CD8-positive, alpha-beta T cell (primary cell): ENCODE measurements at regions of chr6 and their contacts with region 1.

Region 1: DNA sequence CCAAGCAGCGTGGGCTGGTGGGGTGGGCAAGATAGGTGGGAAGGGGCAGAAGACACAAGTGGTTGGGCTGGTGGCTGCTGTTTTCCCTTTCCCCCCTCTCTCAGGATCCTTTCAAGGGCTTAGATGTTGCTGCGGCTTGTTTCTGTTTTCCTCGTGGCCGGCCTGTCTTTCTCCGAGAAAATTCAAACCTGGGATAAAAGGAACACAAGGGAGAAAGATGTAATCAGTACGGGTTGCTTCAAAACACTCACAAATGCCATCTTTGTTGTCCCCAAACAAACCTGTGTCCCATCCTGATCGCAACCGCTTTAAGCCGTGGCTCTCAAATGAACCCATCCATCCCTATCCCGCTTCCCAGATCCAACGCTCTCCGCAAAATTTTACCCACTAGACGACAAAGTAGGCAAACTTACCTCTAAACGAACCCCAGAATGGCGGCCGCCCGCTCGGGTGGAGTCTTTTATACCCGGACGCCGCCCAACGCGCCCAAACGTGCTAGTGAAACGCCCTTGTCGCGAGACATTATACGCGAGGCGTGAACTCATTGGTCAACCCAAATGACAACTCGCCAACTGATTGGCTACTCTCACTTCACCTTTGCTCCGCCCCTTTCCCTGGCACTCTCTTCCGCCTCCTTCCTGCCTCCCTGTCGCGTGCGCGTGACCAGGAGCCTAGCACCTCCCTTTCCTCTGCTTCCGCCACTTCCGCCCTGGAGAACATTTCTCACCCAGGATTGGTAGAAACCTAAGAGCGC is at the start of gene PPP1R10:
- DNase-seq: peak; percentile 95 to 100 (median 97)
- ATAC-seq: peak; percentile 76
- H3K4me3 ChIP-seq: peak within 1 kb of the TSS; percentile 91 to 96
- H3K4me3 Mint-ChIP-seq: peak within 1 kb of the TSS; percentile 100
- H3K27ac ChIP-seq: peak within 1 kb of the TSS; percentile 99 to 100
- H3K27ac Mint-ChIP-seq: peak within 1 kb of the TSS; percentile 100
- H3K4me1 ChIP-seq: peaks cover 43% of the 10 kb centered on the region
- H3K4me1 Mint-ChIP-seq: peaks cover 45% of the 10 kb centered on the region
- H3K27me3 ChIP-seq: no peaks in the 10 kb centered on the region
- H3K27me3 Mint-ChIP-seq: no peaks in the 10 kb centered on the region
- CTCF ChIP-seq: no peak
- total RNA-seq, gene PPP1R10: 85.5 to 95.4 TPM

Region 2: DNA sequence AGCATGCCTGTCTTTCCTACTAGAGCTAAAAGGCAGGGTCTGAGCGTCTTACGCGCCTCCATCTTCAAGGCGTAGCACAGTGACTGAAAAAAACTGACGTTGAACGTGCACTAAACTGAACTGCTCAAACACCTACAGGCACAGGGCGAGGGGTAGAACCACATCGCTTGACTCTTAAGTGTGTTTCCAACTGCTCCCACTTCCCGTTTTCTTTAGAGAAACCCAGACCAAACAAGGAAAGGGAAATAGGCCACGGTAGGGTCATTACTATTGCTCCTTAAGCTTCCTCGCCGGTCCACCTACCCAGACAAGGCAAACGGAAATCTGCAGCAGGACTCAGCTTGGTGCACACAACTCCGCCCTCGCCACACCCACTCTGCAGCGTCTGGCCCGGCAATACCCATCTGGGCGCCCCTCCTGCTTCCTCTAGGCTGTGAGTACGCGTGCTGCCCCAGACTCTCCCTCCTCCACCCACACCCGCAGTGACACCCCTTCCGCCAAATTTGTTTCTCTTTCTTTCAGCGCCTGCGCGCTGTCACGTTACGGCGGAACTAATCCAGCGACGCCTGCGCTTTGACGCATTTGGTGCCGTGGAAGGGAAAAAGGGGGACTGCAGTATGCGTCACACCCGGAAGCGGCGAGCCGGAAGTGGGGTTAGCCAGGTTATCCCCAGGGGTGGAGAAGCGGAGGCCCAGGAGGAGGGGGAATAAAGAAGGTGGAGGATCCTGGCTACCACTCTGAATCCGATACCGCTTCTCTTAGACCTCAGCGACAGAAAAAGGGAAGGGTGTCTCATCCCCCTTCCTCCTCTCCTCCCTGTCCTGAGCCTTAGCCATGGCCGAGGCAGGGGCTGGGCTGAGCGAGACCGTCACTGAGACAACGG is 550.2 kb before region 1 on chr6 and contains the start of gene PPP1R11:
- CTCF ChIA-PET with region 1: no interaction called
- POLR2A ChIA-PET with region 1: interaction called, 4 read pairs
- intact Hi-C with region 1: loop called in 1 of 2 experiments (anchors 5 kb)
- DNase-seq: peak; percentile 96 to 100 (median 98)
- ATAC-seq: peak; percentile 96
- H3K4me3 ChIP-seq: peak within 1 kb of the TSS; percentile 95 to 98
- H3K4me3 Mint-ChIP-seq: peak within 1 kb of the TSS; percentile 100
- H3K27ac ChIP-seq: peak within 1 kb of the TSS; percentile 96 to 99
- H3K27ac Mint-ChIP-seq: peak within 1 kb of the TSS; percentile 100
- H3K4me1 ChIP-seq: peaks cover 44% of the 10 kb centered on the region
- H3K4me1 Mint-ChIP-seq: peaks cover 56% of the 10 kb centered on the region
- H3K27me3 ChIP-seq: peaks cover 0 to 1% of the 10 kb centered on the region in 2 experiments
- H3K27me3 Mint-ChIP-seq: peaks cover 12% of the 10 kb centered on the region
- CTCF ChIP-seq: no peak
- total RNA-seq, gene PPP1R11: 24.7 to 28.3 TPM

Region 3: GRCh38 chr6:30489081-30490025 is 127.6 kb before region 1 on chr6 and contains the start of gene HLA-E:
- CTCF ChIA-PET with region 1: interaction called, 11 read pairs
- POLR2A ChIA-PET with region 1: interaction called, 37 read pairs
- intact Hi-C with region 1: loop called (anchors 1 kb)
- DNase-seq: peak; percentile 75 to 100 (median 87)
- ATAC-seq: peak; percentile 80
- H3K4me3 ChIP-seq: peak within 1 kb of the TSS; percentile 93 to 99
- H3K4me3 Mint-ChIP-seq: peak within 1 kb of the TSS; percentile 99
- H3K27ac ChIP-seq: peak within 1 kb of the TSS; percentile 94 to 96
- H3K27ac Mint-ChIP-seq: peak within 1 kb of the TSS; percentile 98
- H3K4me1 ChIP-seq: peaks cover 31% of the 10 kb centered on the region
- H3K4me1 Mint-ChIP-seq: peaks cover 52% of the 10 kb centered on the region
- H3K27me3 ChIP-seq: no peaks in the 10 kb centered on the region
- H3K27me3 Mint-ChIP-seq: no peaks in the 10 kb centered on the region
- CTCF ChIP-seq: no peak
- total RNA-seq, gene HLA-E: 1,266 to 1,281 TPM

Region 4: DNA sequence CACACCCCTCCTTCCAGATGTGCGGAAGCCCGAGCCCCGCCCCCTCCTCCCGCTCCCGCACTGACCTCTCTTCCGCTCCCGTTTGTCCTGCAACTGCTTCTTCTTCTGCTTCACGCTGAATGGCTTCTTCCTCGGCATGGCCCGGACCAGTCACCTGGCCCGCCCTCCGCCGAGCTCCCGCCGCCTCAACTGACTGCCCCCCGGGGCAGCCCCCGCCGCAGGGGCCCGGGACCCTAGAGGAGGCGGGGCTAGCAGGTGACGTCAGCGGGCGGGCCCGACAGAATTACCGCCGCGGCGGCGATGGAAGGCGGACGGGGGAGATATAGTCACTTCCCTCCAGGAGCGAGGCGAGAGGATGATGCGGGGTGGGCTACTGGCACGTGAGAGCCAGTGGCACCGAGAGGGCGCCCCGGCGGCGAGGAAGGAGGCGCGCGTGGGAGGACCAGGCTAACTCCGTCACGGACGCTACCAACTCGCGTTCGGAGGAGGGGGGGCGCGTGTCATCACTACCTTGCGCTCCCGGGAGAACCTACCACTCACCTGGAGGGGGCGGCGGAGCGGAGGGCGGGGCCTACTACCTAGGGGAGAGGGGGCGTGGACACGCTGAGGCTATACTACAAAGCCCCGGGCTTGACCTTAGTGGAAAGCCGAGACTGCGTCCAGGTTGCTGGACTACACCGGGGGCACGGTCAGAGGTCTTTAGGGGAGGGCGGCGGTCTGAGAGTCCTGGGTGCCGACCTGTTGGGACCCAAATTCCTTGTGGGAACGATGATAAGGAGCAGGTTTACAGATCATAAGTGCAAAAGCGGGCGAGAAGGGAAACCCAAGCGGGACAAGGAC is 60.7 kb before region 1 on chr6 and contains the start of gene GNL1:
- CTCF ChIA-PET with region 1: interaction called, 3 read pairs
- POLR2A ChIA-PET with region 1: interaction called, 30 read pairs
- intact Hi-C with region 1: loop called (anchors 1 kb)
- DNase-seq: peak; percentile 97 to 100 (median 99)
- ATAC-seq: peak; percentile 90
- H3K4me3 ChIP-seq: peak within 1 kb of the TSS; percentile 75 to 92
- H3K4me3 Mint-ChIP-seq: peak within 1 kb of the TSS; percentile 95
- H3K27ac ChIP-seq: peak within 1 kb of the TSS; percentile 98 to 99
- H3K27ac Mint-ChIP-seq: peak within 1 kb of the TSS; percentile 99
- H3K4me1 ChIP-seq: peaks cover 25% of the 10 kb centered on the region
- H3K4me1 Mint-ChIP-seq: peaks cover 42% of the 10 kb centered on the region
- H3K27me3 ChIP-seq: no peaks in the 10 kb centered on the region
- H3K27me3 Mint-ChIP-seq: no peaks in the 10 kb centered on the region
- CTCF ChIP-seq: no peak
- total RNA-seq, gene GNL1: 148 to 159 TPM

Region 5: GRCh38 chr6:30646458-30647241 is 29.7 kb after region 1 on chr6 and contains the start of gene C6orf136:
- CTCF ChIA-PET with region 1: interaction called, 3 read pairs
- POLR2A ChIA-PET with region 1: interaction called, 17 read pairs
- intact Hi-C with region 1: loop called in 1 of 2 experiments (anchors 1 kb)
- DNase-seq: peak; percentile 84 to 98 (median 92)
- ATAC-seq: peak; percentile 83
- H3K4me3 ChIP-seq: peak within 1 kb of the TSS; percentile 91 to 93
- H3K4me3 Mint-ChIP-seq: peak within 1 kb of the TSS; percentile 86
- H3K27ac ChIP-seq: peak within 1 kb of the TSS; percentile 80 to 92
- H3K27ac Mint-ChIP-seq: peak within 1 kb of the TSS; percentile 92
- H3K4me1 ChIP-seq: peaks cover 20% of the 10 kb centered on the region
- H3K4me1 Mint-ChIP-seq: peaks cover 30% of the 10 kb centered on the region
- H3K27me3 ChIP-seq: no peaks in the 10 kb centered on the region
- H3K27me3 Mint-ChIP-seq: no peaks in the 10 kb centered on the region
- CTCF ChIP-seq: no peak
- total RNA-seq, gene C6orf136: 31.4 to 36.0 TPM

Region 6: GRCh38 chr6:30730601-30731435 is 113.8 kb after region 1 on chr6:
- CTCF ChIA-PET with region 1: interaction called, 9 read pairs
- POLR2A ChIA-PET with region 1: interaction called, 16 read pairs
- intact Hi-C with region 1: no loop called
- DNase-seq: peak; percentile 67 to 91 (median 85)
- ATAC-seq: peak; percentile 98
- H3K4me3 ChIP-seq: peak overlapping the region in 1 of 2 experiments; percentile 21
- H3K4me3 Mint-ChIP-seq: peak overlapping the region; percentile 47
- H3K27ac ChIP-seq: no peak overlapping the region
- H3K27ac Mint-ChIP-seq: no peak overlapping the region
- H3K4me1 ChIP-seq: peaks cover 29% of the 10 kb centered on the region
- H3K4me1 Mint-ChIP-seq: peaks cover 37% of the 10 kb centered on the region
- H3K27me3 ChIP-seq: no peaks in the 10 kb centered on the region
- H3K27me3 Mint-ChIP-seq: no peaks in the 10 kb centered on the region
- CTCF ChIP-seq: peak; percentile 67